ENCODE measurements at regions of chr6 and their contacts with region 1.

Region 1: GRCh38 chr6:91276315-91276714 is 689.4 kb upstream of the MAP3K7 start:
- DNase-seq: peak; percentile 71
- H3K4me3 ChIP-seq: no peak overlapping the region
- H3K27ac ChIP-seq: peak overlapping the region; percentile 10
- H3K4me1 ChIP-seq: peaks cover 48% of the 10 kb centered on the region
- H3K27me3 ChIP-seq: no peaks in the 10 kb centered on the region
- CTCF ChIP-seq: peak; percentile 65

Region 2: GRCh38 chr6:90274451-90275030 is 1001.8 kb before region 1 on chr6:
- CTCF ChIA-PET with region 1: no interaction called
- POLR2A ChIA-PET with region 1: no interaction called
- intact Hi-C with region 1: no loop called
- DNase-seq: no peak
- H3K4me3 ChIP-seq: no peak overlapping the region
- H3K27ac ChIP-seq: no peak overlapping the region
- H3K4me1 ChIP-seq: no peaks in the 10 kb centered on the region
- H3K27me3 ChIP-seq: peaks cover 28% of the 10 kb centered on the region
- CTCF ChIP-seq: peak; percentile 35; the same call in 1 of the 2 replicates

Region 3: DNA sequence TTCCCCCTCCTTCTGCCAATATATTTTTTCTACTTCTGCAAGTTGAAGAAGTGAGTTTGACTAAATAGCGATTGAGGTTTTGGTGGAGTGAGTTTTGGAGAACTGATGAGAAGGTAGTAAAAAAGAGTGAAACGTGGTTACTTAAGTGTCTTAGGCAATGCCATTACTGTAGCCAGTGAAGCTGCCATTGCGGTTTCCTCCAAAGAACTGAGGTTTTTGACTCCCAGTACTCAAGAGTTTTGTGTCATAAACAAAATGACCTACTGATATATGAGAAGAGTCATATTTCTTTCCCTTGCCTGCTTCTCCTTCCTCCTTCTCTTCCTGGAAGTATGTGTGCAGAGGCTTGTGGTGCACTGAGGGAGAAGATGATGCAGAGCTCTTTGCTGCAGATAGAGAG is 135.0 kb before region 1 on chr6:
- CTCF ChIA-PET with region 1: no interaction called
- POLR2A ChIA-PET with region 1: no interaction called
- intact Hi-C with region 1: loop called (anchors 1 kb)
- DNase-seq: no peak
- H3K4me3 ChIP-seq: no peak overlapping the region
- H3K27ac ChIP-seq: peak overlapping the region; percentile 48
- H3K4me1 ChIP-seq: peaks cover 61% of the 10 kb centered on the region
- H3K27me3 ChIP-seq: no peaks in the 10 kb centered on the region
- CTCF ChIP-seq: no peak

Region 4: GRCh38 chr6:91167837-91168236 is 108.5 kb before region 1 on chr6:
- CTCF ChIA-PET with region 1: no interaction called
- POLR2A ChIA-PET with region 1: no interaction called
- intact Hi-C with region 1: loop called (anchors 5 kb)
- DNase-seq: peak; percentile 62
- H3K4me3 ChIP-seq: no peak overlapping the region
- H3K27ac ChIP-seq: no peak overlapping the region
- H3K4me1 ChIP-seq: peaks cover 45% of the 10 kb centered on the region
- H3K27me3 ChIP-seq: no peaks in the 10 kb centered on the region
- CTCF ChIP-seq: peak; percentile 55

Region 5: DNA sequence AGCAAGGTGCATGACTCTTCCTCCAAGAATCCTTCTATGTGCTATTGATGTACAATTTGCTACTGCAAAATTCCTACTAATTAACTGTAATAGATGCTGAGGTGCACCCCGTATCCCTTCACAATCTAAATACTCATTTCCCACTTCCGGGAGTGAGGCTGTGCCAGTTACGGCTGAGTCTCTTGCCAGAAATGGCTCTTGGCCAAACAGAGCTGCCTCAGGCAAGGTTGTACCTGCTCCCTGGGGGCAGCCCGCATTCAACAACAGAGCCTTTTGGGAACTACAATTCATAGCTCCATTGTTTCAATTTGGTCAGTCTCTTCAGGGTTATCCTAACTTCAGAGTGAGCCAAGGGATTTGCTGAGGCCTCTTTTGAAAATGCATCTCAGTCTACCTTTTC is 100.4 kb after region 1 on chr6:
- CTCF ChIA-PET with region 1: no interaction called
- POLR2A ChIA-PET with region 1: no interaction called
- intact Hi-C with region 1: no loop called
- DNase-seq: peak; percentile 4
- H3K4me3 ChIP-seq: no peak overlapping the region
- H3K27ac ChIP-seq: no peak overlapping the region
- H3K4me1 ChIP-seq: no peaks in the 10 kb centered on the region
- H3K27me3 ChIP-seq: no peaks in the 10 kb centered on the region
- CTCF ChIP-seq: no peak